ENCODE measurements at regions of chr6 and their contacts with region 1.

Region 1: DNA sequence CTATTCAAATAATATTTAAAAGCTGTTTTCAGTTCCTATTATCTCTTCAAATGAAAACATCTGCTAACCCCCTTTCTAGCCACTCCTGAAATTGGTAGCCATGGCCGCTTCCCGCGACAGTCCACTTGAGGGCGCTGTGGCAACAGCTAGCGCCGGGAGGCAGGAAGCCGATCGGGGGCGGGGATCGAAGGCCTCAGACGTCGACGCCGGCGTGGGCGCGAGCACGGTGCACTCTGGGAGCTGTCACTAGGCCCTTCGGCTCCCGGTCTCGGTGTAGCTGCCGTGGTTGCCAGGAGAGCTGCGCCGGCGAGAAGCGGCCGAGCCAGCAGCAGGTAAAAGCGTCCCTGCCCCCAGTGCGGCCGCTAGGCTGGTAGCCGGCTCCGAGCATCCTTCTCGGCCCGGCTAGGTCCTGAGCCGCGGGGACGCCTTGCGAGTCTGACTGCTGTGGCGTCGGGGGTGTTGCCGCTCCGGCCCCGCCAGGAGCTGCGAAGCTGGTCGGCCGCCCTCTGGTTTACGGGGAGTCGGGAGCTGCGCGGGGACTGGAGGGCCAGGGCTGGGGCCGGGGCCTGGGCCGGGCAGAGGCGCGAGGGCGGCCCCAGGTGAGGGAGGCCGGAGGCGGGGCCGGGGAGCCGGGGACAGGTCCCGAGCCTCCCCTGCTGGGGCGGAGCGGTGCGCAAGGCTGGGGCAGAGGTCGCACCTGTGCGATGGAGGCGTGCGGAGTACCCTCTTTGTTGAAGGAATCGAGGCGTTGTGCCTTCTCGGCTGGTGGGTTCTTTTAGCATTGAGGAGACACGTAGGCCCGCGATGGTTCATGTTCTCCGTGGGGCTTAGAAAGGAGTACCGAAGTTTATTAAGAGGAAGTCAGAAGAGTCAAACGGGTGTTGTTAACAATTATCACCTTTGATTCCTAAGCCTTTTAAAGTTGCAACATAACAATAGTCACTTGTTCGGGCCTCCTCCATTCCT is at the start of gene DOP1A:
- DNase-seq: peak; percentile 98
- H3K4me3 Mint-ChIP-seq: peak within 1 kb of the TSS; percentile 88
- H3K27ac Mint-ChIP-seq: peak within 1 kb of the TSS; percentile 79
- H3K4me1 Mint-ChIP-seq: peaks cover 42% of the 10 kb centered on the region
- H3K27me3 Mint-ChIP-seq: no peaks in the 10 kb centered on the region
- total RNA-seq, gene DOP1A: 5.9 to 8.8 TPM

Region 2: GRCh38 chr6:82270881-82271645 is 796.7 kb before region 1 on chr6:
- CTCF ChIA-PET with region 1: interaction called, 39 read pairs
- POLR2A ChIA-PET with region 1: no interaction called
- intact Hi-C with region 1: no loop called
- DNase-seq: no peak
- H3K4me3 Mint-ChIP-seq: no peak overlapping the region
- H3K27ac Mint-ChIP-seq: no peak overlapping the region
- H3K4me1 Mint-ChIP-seq: peaks cover 2% of the 10 kb centered on the region
- H3K27me3 Mint-ChIP-seq: no peaks in the 10 kb centered on the region

Region 3: GRCh38 chr6:82741996-82742385 is 325.7 kb before region 1 on chr6:
- CTCF ChIA-PET with region 1: no interaction called
- POLR2A ChIA-PET with region 1: no interaction called
- intact Hi-C with region 1: no loop called
- DNase-seq: no peak
- H3K4me3 Mint-ChIP-seq: no peak overlapping the region
- H3K27ac Mint-ChIP-seq: no peak overlapping the region
- H3K4me1 Mint-ChIP-seq: no peaks in the 10 kb centered on the region
- H3K27me3 Mint-ChIP-seq: peaks cover 4% of the 10 kb centered on the region

Region 4: GRCh38 chr6:82862543-82862942 is 205.2 kb before region 1 on chr6:
- CTCF ChIA-PET with region 1: no interaction called
- POLR2A ChIA-PET with region 1: no interaction called
- intact Hi-C with region 1: no loop called
- DNase-seq: no peak
- H3K4me3 Mint-ChIP-seq: no peak overlapping the region
- H3K27ac Mint-ChIP-seq: no peak overlapping the region
- H3K4me1 Mint-ChIP-seq: no peaks in the 10 kb centered on the region
- H3K27me3 Mint-ChIP-seq: no peaks in the 10 kb centered on the region

Region 5: GRCh38 chr6:83119742-83120300 is 52.1 kb after region 1 on chr6:
- CTCF ChIA-PET with region 1: interaction called, 11 read pairs
- POLR2A ChIA-PET with region 1: no interaction called
- intact Hi-C with region 1: no loop called
- DNase-seq: no peak
- H3K4me3 Mint-ChIP-seq: no peak overlapping the region
- H3K27ac Mint-ChIP-seq: no peak overlapping the region
- H3K4me1 Mint-ChIP-seq: no peaks in the 10 kb centered on the region
- H3K27me3 Mint-ChIP-seq: no peaks in the 10 kb centered on the region

Region 6: GRCh38 chr6:83192871-83193746 is 125.4 kb after region 1 on chr6 and contains the starts of genes PGM3 and RWDD2A:
- CTCF ChIA-PET with region 1: interaction called, 31 read pairs
- POLR2A ChIA-PET with region 1: interaction called, 7 read pairs
- intact Hi-C with region 1: loop called (anchors 1 kb)
- DNase-seq: peak; percentile 93
- H3K4me3 Mint-ChIP-seq: peak within 1 kb of the TSS; percentile 95
- H3K27ac Mint-ChIP-seq: peak within 1 kb of the TSS; percentile 92
- H3K4me1 Mint-ChIP-seq: peaks cover 44% of the 10 kb centered on the region
- H3K27me3 Mint-ChIP-seq: no peaks in the 10 kb centered on the region
- total RNA-seq, gene PGM3: 20.7 to 24.6 TPM
- total RNA-seq, gene RWDD2A: 2.6 TPM

Region 7: DNA sequence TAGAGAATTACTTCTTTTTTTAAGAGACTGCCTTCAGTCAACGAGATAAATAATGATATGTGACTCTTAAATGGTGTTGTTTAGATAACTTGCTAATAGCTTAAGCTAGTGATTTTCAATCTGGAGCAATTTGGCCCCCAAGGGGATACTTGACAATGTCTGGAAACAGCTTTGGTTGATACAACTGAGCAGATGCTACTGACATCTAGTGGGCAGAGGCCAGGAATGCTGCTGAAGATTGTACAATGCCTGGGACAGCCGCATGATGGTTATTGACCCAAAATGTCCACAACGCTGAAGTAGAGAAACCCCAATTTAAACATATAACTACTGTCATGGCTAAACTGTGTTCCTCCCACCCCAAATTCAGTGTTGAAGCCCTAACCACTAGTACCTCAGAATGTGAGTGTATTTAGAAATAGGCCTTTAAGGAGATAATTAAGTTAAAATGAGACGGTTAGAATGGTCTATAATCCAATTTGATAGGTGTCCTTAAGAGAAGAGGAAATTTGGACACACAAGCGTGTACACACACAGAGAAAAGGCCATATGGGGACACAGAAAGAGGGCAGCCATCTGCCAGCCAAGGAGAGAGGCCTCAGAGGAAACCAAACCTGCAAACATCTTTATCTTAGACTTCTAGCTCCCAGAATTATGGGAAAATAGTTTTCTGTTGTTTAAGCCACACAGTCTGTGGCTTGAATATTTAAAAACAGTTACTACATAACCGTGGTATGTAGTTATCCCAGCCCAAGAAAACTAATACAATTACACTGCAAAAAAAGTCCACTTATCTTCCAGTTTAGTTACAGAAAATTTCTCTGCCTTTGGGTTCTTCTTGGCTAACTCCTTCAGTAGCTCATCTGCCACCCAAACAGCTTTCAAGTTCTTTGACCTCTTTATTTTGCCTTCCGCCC is 147.7 kb after region 1 on chr6:
- CTCF ChIA-PET with region 1: interaction called, 167 read pairs
- POLR2A ChIA-PET with region 1: interaction called, 3 read pairs
- intact Hi-C with region 1: loop called (anchors 1 kb)
- DNase-seq: peak; percentile 70
- H3K4me3 Mint-ChIP-seq: no peak overlapping the region
- H3K27ac Mint-ChIP-seq: no peak overlapping the region
- H3K4me1 Mint-ChIP-seq: no peaks in the 10 kb centered on the region
- H3K27me3 Mint-ChIP-seq: peaks cover 5% of the 10 kb centered on the region

Region 8: GRCh38 chr6:83536034-83536646 is 468.4 kb after region 1 on chr6:
- CTCF ChIA-PET with region 1: interaction called, 10 read pairs
- POLR2A ChIA-PET with region 1: no interaction called
- intact Hi-C with region 1: no loop called
- DNase-seq: peak; percentile 56
- H3K4me3 Mint-ChIP-seq: no peak overlapping the region
- H3K27ac Mint-ChIP-seq: no peak overlapping the region
- H3K4me1 Mint-ChIP-seq: no peaks in the 10 kb centered on the region
- H3K27me3 Mint-ChIP-seq: peaks cover 2% of the 10 kb centered on the region

Region 9: GRCh38 chr6:84227434-84228197 is 1159.9 kb after region 1 on chr6 and contains the start of gene CEP162:
- CTCF ChIA-PET with region 1: interaction called, 6 read pairs
- POLR2A ChIA-PET with region 1: no interaction called
- intact Hi-C with region 1: loop called (anchors 1 kb)
- DNase-seq: peak; percentile 92
- H3K4me3 Mint-ChIP-seq: peak within 1 kb of the TSS; percentile 100
- H3K27ac Mint-ChIP-seq: peak within 1 kb of the TSS; percentile 93
- H3K4me1 Mint-ChIP-seq: peaks cover 14% of the 10 kb centered on the region
- H3K27me3 Mint-ChIP-seq: peaks cover 6% of the 10 kb centered on the region
- total RNA-seq, gene CEP162: 5.4 to 6.3 TPM

Measured in activated CD4-positive, alpha-beta memory T cell treated with anti-CD3 and anti-CD28 coated beads for 36 hours (primary cell).